Posterior cingulate gyrus (tissue), 11 donors: ENCODE measurements at regions of chr6 and their contacts with region 1.

Region 1: GRCh38 chr6:145633981-145634627 is 101.2 kb downstream of the EPM2A start:
- DNase-seq: peak; percentile 73 to 97 (median 93)

Region 2: GRCh38 chr6:144095331-144096002 is 1538.6 kb before region 1 on chr6 and contains the start of gene SF3B5:
- intact Hi-C with region 1: loop called (anchors 10 kb)
- DNase-seq: peak; percentile 96 to 100 (median 98)